Transverse colon (tissue), 4 donors: ENCODE measurements at regions of chr1 and their contacts with region 1.

Region 1: DNA sequence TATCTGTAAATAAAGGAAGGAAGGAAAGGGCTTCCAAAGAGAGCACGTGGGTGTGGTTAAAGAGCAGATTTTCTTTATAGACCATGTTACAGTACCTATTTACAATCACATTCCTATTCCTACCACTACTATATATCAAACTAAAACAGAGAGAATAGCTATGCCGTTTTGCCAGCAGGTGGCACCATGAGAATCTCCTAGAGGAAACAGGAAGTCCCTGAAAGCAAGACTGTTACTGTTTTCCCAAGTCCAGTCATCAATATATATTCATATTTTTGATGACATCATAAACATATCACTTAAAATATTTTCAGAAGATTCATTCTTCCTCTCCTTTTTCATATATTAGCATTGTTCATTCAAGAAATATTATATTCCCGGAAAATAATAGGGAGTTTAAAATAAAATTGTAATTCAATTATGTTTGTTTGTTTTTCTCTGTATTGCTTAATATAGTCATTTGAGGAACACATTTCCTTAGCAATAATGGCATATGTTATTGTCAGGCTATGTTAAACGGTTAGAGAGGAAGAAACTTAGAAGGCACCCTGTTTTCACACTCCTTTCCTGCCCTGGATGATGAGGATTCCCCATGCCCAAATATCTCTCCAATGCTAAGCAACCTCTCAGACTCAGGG is 6.6 kb downstream of the CCDC190 start:
- DNase-seq: peak; percentile 63
- H3K4me3 ChIP-seq: no peak overlapping the region
- H3K27ac ChIP-seq: no peak overlapping the region
- H3K4me1 ChIP-seq: no peaks in the 10 kb centered on the region
- H3K27me3 ChIP-seq: no peaks in the 10 kb centered on the region
- CTCF ChIP-seq: peak; percentile 51 to 76 (median 63)
- EP300 ChIP-seq: no peak
- POLR2A ChIP-seq: no peak

Region 2: DNA sequence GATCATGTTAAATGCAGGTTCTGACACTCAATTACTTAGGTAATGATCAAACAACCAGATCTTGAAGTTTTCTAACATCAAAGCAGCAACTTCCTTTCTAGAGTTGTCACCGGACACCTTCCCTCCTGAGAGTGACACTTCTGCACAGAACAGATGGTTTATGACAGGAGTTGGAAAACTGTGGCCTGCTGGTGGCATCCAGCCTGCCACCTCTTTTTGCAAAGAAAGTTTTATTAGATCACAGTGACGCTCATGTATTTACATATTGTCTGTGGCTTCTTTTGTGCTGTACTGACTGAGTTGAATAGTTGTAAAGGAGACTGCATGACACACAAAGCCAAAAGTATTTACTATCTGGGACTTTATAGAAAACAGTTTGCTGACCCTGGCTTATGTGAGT is 193.8 kb before region 1 on chr1:
- in situ Hi-C with region 1: no loop called
- intact Hi-C with region 1: no loop called
- DNase-seq: no peak
- H3K4me3 ChIP-seq: no peak overlapping the region
- H3K27ac ChIP-seq: no peak overlapping the region
- H3K4me1 ChIP-seq: peaks cover 0 to 15% (median 2%) of the 10 kb centered on the region in 4 donors
- H3K27me3 ChIP-seq: no peaks in the 10 kb centered on the region
- CTCF ChIP-seq: no peak
- EP300 ChIP-seq: no peak
- POLR2A ChIP-seq: no peak

Region 3: GRCh38 chr1:163013826-163014600 is 159.6 kb after region 1 on chr1:
- in situ Hi-C with region 1: no loop called
- intact Hi-C with region 1: no loop called
- DNase-seq: no peak
- H3K4me3 ChIP-seq: no peak overlapping the region
- H3K27ac ChIP-seq: no peak overlapping the region
- H3K4me1 ChIP-seq: no peaks in the 10 kb centered on the region
- H3K27me3 ChIP-seq: no peaks in the 10 kb centered on the region
- CTCF ChIP-seq: no peak
- EP300 ChIP-seq: no peak
- POLR2A ChIP-seq: no peak

Region 4: DNA sequence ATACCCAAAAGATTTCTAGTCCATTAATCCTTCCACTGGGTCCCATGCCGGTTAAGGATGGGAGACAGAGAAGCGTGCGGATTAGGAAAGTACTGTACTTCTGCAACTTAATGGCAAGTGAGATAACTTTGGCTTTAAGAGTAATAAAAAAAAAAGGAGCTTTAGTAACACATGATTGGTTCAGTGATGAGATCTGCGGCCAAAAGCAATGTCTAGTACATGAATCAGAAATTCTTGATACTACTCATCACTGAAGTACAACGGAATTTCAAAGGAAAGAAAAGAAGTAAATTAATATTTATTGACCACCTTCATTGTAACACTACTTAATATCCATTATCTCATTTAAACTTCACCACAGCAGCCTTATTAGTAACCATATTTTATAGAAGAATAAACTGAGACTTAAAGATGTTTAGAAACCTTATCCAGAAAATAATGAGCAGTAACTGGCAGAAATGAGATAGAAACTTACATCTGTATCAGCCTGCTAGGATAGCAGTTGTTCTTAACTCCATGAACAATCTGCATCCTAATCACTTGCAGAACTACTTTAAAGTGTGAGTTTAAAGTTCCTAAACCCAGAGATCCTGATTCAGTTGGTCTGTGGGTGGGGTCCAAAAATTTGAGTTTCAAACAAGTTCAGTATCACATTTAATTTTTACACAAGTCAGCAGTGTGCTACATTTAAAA is 453.3 kb after region 1 on chr1:
- in situ Hi-C with region 1: loop called (anchors 10 to 25 kb)
- intact Hi-C with region 1: no loop called
- DNase-seq: no peak
- H3K4me3 ChIP-seq: no peak overlapping the region
- H3K27ac ChIP-seq: no peak overlapping the region
- H3K4me1 ChIP-seq: no peaks in the 10 kb centered on the region
- H3K27me3 ChIP-seq: no peaks in the 10 kb centered on the region
- CTCF ChIP-seq: no peak
- EP300 ChIP-seq: no peak
- POLR2A ChIP-seq: no peak

Region 5: GRCh38 chr1:163321311-163322305 is 467.2 kb after region 1 on chr1 and contains the start of gene NUF2:
- in situ Hi-C with region 1: loop called in 2 of 4 experiments (anchors 25 kb)
- intact Hi-C with region 1: no loop called
- DNase-seq: peak; percentile 98
- H3K4me3 ChIP-seq: peak within 1 kb of the TSS; percentile 55 to 87 (median 71)
- H3K27ac ChIP-seq: peak within 1 kb of the TSS; percentile 79 to 83 (median 81)
- H3K4me1 ChIP-seq: peaks cover 0 to 14% (median 13%) of the 10 kb centered on the region in 4 donors
- H3K27me3 ChIP-seq: no peaks in the 10 kb centered on the region
- CTCF ChIP-seq: no peak
- EP300 ChIP-seq: no peak
- POLR2A ChIP-seq: no peak
- total RNA-seq, gene NUF2: 1.1 to 28.5 TPM in 2 of 4 donors, not detected in the others